ENCODE measurements at regions of chr6 and their contacts with region 1.

Region 1: GRCh38 chr6:157034436-157035230 is 257.5 kb downstream of the ARID1B start:
- DNase-seq: no peak
- ATAC-seq: peak in 5 of 8 donors; percentile 55 to 76 (median 67)
- H3K4me3 ChIP-seq: no peak overlapping the region
- H3K27ac ChIP-seq: peak overlapping the region in 4 of 10 donors; percentile 29 to 86 (median 72)
- H3K4me1 ChIP-seq: peaks cover 0 to 52% (median 44%) of the 10 kb centered on the region in 9 donors
- H3K27me3 ChIP-seq: no peaks in the 10 kb centered on the region
- CTCF ChIP-seq: peak; percentile 37 to 76 (median 65)

Region 2: GRCh38 chr6:157148391-157149323 is 114.0 kb after region 1 on chr6:
- intact Hi-C with region 1: loop called in 2 of 10 experiments (anchors 10 kb)
- DNase-seq: peak; percentile 59 to 82
- ATAC-seq: peak; percentile 63 to 90 (median 79)
- H3K4me3 ChIP-seq: no peak overlapping the region
- H3K27ac ChIP-seq: peak overlapping the region in 9 of 10 donors; percentile 30 to 78 (median 59)
- H3K4me1 ChIP-seq: peaks cover 25 to 77% (median 68%) of the 10 kb centered on the region in 9 donors
- H3K27me3 ChIP-seq: no peaks in the 10 kb centered on the region
- CTCF ChIP-seq: no peak

Region 3: GRCh38 chr6:157184202-157185020 is 149.8 kb after region 1 on chr6:
- intact Hi-C with region 1: loop called in 9 of 10 experiments (anchors 2 to 10 kb)
- DNase-seq: peak; percentile 63 to 72
- ATAC-seq: peak; percentile 66 to 87 (median 76)
- H3K4me3 ChIP-seq: peak overlapping the region in 2 of 10 donors; percentile 20 to 23
- H3K27ac ChIP-seq: peak overlapping the region in 2 of 10 donors; percentile 5 to 24
- H3K4me1 ChIP-seq: peaks cover 0 to 42% (median 23%) of the 10 kb centered on the region in 9 donors
- H3K27me3 ChIP-seq: no peaks in the 10 kb centered on the region
- CTCF ChIP-seq: peak; percentile 77 to 93 (median 90)